Activated T-helper 1 cell treated with anti-CD3 and anti-CD28 coated beads, Interleukin-12 subunit alpha, Interleukin-12 subunit beta, Interleukin-2, Interleukin-4 antibody, amounts not matched to agents 30 ng/mL and 10 ng/mL and 1 ng/mL, durations not matched to agents 14 hours and 24 hours and 36 hours (primary cell): ENCODE measurements at regions of chr16 and their contacts with region 1.

Region 1: DNA sequence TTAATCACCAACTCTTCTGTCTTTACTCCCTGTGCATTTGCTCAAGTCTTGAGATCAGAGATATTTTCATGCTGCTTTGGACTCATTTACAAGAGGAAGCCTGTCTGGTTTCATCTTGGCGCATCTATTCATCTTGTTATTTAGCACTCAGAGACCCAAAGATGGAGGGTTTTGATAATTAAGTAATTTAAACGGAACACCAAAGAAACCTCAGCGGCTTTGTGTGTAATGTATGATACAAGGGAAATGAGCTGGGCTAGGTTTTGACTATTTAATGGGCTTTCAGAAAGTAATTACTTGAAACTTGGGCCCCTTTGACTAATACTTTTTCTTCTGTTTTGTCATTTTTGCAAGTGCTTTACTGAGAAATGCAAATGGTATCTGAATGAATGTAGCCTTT is 66.2 kb upstream of the CACNG3 start:
- DNase-seq: no peak
- H3K4me3 Mint-ChIP-seq: no peak overlapping the region
- H3K27ac Mint-ChIP-seq: peak overlapping the region; percentile 67
- H3K4me1 Mint-ChIP-seq: peaks cover 25% of the 10 kb centered on the region
- H3K27me3 Mint-ChIP-seq: no peaks in the 10 kb centered on the region

Region 2: DNA sequence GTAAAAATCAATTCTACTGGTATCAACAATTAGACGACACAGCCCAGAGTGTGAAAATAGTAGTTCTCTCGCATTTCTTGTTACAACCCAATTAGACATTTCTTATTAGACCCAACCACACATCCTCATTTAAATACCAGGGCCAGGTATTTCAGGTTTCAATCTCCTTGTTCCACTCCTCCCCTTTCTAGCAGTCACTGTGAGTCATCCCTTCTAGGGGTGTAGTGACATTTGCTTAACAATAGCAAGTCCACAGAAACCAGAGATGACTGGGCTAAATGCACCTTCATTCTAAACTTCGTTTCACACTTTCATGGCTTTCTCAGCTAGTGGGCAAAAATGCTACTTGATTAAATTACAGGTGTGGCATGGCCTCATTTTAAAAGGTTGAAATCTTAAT is 50.7 kb before region 1 on chr16:
- intact Hi-C with region 1: loop called (anchors 1 kb)
- DNase-seq: no peak
- H3K4me3 Mint-ChIP-seq: no peak overlapping the region
- H3K27ac Mint-ChIP-seq: peak overlapping the region; percentile 55
- H3K4me1 Mint-ChIP-seq: peaks cover 13% of the 10 kb centered on the region
- H3K27me3 Mint-ChIP-seq: no peaks in the 10 kb centered on the region